A549 (cell line): ENCODE measurements at regions of chr1 and their contacts with region 1.

Region 1: GRCh38 chr1:205977402-205978014 is 25.7 kb downstream of the RAB7B start:
- DNase-seq: peak; percentile 70 to 81
- ATAC-seq: peak; percentile 85 to 97
- H3K4me3 ChIP-seq: no peak overlapping the region
- H3K27ac ChIP-seq: peak overlapping the region; percentile 59 to 77; a peak in 4 of 6 replicates
- H3K4me1 ChIP-seq: peaks cover 16% of the 10 kb centered on the region
- CTCF ChIP-seq: peak; percentile 98
- EP300 ChIP-seq: no peak
- POLR2A ChIP-seq: no peak
- RAD21 ChIP-seq: peak; percentile 99

Region 2: DNA sequence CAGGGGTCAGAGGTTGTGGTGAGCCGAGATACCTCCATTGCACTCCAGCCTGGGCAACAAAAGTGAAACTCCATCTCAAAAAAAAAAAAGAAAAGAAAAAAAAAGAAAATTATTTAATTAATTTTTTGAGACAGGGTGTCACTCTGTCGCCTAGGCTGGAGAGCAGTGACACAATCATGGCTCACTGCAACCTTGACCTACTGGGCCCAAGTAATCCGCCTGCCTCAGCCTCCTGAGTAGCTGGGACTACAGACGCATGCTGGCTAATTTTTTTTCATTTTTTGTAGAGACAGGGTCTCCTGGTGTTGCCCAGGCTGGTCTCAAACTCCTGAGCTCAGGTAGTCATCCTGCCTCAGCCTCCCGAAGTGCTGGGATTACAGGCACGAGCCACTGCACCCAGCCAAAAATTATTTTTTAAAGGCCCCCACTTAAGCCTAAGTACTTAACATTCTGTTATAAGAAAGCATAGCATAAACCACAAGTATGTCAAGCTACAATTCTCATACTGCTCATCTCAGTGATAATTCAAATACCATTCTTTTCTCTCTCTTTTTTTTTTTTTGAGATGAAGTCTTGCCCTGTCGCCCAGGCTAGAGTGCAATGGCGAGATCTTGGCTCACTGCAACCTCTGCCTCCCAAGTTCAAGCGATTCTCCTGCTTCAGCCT is 247.4 kb before region 1 on chr1:
- CTCF ChIA-PET with region 1: no interaction called
- POLR2A ChIA-PET with region 1: no interaction called
- DNase-seq: no peak
- ATAC-seq: no peak; a peak in 1 of 6 replicates
- H3K4me3 ChIP-seq: no peak overlapping the region
- H3K27ac ChIP-seq: no peak overlapping the region
- H3K4me1 ChIP-seq: peaks cover 33% of the 10 kb centered on the region
- CTCF ChIP-seq: no peak
- EP300 ChIP-seq: no peak
- POLR2A ChIP-seq: no peak
- RAD21 ChIP-seq: no peak

Region 3: DNA sequence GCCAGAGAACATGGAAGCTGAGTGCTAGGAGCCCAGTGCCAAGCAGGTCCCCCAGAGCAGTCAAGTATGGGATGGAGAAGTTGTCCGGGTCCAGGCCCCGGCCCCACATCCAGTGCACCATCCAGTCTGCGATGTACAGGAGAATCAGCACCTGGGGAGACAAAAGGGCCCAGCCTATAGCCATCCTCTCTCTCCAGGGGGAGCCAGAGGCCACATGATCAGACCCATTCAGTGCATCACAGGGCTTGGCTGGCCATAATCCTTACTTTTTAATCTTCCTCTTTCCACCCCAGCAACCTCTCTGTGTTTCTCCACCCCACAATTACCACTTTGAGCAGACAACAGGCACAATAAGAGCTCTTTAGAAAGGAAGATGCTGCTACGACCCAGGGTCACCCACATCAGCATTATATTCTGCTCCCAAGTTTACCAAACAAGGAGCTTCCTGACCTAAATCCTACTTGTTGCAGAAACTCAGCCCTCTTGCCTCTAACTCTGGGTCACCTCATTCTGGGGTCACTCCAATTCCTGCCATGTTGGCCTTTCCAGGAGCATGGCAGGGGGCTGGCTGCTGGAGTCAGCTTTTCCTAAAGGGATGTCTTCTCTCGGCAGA is 185.8 kb before region 1 on chr1:
- CTCF ChIA-PET with region 1: interaction called, 371 read pairs
- POLR2A ChIA-PET with region 1: interaction called, 3 read pairs
- DNase-seq: peak; percentile 49 to 83
- ATAC-seq: peak; percentile 96 to 99
- H3K4me3 ChIP-seq: no peak overlapping the region
- H3K27ac ChIP-seq: no peak overlapping the region
- H3K4me1 ChIP-seq: no peaks in the 10 kb centered on the region
- CTCF ChIP-seq: peak; percentile 90
- EP300 ChIP-seq: no peak
- POLR2A ChIP-seq: no peak
- RAD21 ChIP-seq: peak; percentile 95 to 98

Region 4: DNA sequence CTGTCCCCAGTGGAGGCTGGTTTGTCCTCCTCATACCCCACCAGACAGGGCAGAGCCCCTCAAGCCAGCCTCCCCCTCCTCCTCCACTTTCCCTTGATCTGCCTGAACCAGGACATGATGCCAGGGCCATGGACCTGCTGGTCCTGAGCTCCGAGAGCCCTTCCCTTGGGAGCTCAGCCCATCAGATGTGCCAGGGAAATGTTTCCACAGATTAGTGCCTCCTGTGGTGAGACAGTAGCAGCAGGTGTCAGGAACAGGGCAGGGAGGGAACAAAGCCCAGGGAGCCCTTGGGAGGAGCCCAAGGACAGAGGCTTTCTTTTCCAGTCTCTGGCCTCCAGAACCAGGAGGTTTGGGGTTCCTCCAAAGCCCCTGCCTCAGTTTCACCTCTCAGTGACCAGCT is 149.9 kb before region 1 on chr1:
- CTCF ChIA-PET with region 1: interaction called, 10 read pairs
- POLR2A ChIA-PET with region 1: no interaction called
- DNase-seq: peak in 1 of 2 experiments; percentile 13
- ATAC-seq: peak; percentile 86 to 93
- H3K4me3 ChIP-seq: no peak overlapping the region
- H3K27ac ChIP-seq: no peak overlapping the region
- H3K4me1 ChIP-seq: no peaks in the 10 kb centered on the region
- CTCF ChIP-seq: no peak
- EP300 ChIP-seq: no peak
- POLR2A ChIP-seq: no peak
- RAD21 ChIP-seq: no peak

Region 5: GRCh38 chr1:205879975-205880374 is 97.5 kb before region 1 on chr1:
- CTCF ChIA-PET with region 1: no interaction called
- POLR2A ChIA-PET with region 1: no interaction called
- DNase-seq: no peak
- ATAC-seq: no peak
- H3K4me3 ChIP-seq: no peak overlapping the region
- H3K27ac ChIP-seq: no peak overlapping the region
- H3K4me1 ChIP-seq: no peaks in the 10 kb centered on the region
- CTCF ChIP-seq: no peak
- EP300 ChIP-seq: no peak
- POLR2A ChIP-seq: no peak
- RAD21 ChIP-seq: no peak

Region 6: DNA sequence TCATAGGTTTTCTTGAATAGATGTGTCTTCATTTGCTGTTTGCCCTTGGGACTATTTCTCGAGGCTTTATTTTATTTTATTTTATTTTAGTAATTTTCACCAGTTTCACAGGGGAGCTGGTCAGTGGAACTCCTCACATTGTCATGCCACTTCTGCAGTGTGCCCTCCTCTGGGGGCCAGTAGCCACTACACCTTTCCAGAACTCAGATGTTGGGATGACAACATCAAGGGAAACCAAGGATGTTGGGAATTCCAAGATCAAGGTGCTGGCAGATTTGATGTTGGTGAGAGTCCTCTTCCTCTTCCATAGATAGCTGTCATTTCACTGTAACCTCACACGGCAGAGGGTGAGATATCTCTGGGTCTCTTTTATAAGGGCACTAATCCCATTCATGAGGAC is 69.7 kb before region 1 on chr1:
- CTCF ChIA-PET with region 1: interaction called, 822 read pairs
- POLR2A ChIA-PET with region 1: no interaction called
- DNase-seq: peak in 1 of 2 experiments; percentile 52
- ATAC-seq: peak; percentile 90 to 92; a peak in 5 of 6 replicates
- H3K4me3 ChIP-seq: no peak overlapping the region
- H3K27ac ChIP-seq: peak overlapping the region; percentile 26 to 57; a peak in 2 of 6 replicates
- H3K4me1 ChIP-seq: peaks cover 7% of the 10 kb centered on the region; the same call in 2 of the 3 replicates
- CTCF ChIP-seq: peak; percentile 68
- EP300 ChIP-seq: no peak
- POLR2A ChIP-seq: no peak
- RAD21 ChIP-seq: peak; percentile 63 to 77

Region 7: DNA sequence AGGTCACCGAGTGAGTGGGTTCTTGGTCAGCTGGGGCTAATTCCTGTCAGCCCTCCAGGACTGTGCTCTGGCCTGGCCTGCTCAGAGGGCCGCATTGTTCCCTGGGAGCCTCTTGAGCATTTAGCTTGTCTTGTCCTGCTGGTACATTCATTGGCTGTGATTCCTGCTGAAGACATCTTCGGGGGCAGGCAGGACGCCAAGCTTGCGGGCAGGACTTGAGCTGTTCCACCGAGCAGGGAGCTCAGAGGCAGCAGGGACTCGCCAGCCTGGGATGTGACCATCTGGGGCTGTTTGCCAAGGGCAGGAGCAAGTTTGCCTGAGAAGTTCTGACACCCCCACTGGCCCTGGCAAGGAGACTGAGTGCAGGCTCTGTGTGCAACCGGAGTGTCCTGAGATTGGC is 27.2 kb before region 1 on chr1:
- CTCF ChIA-PET with region 1: interaction called, 139 read pairs
- POLR2A ChIA-PET with region 1: no interaction called
- DNase-seq: no peak
- ATAC-seq: no peak
- H3K4me3 ChIP-seq: no peak overlapping the region
- H3K27ac ChIP-seq: no peak overlapping the region
- H3K4me1 ChIP-seq: no peaks in the 10 kb centered on the region
- CTCF ChIP-seq: no peak
- EP300 ChIP-seq: no peak
- POLR2A ChIP-seq: no peak
- RAD21 ChIP-seq: no peak

Region 8: GRCh38 chr1:206001476-206001888 is 24.0 kb after region 1 on chr1:
- CTCF ChIA-PET with region 1: interaction called, 34 read pairs
- POLR2A ChIA-PET with region 1: no interaction called
- DNase-seq: peak; percentile 53 to 90
- ATAC-seq: peak; percentile 90
- H3K4me3 ChIP-seq: no peak overlapping the region
- H3K27ac ChIP-seq: peak overlapping the region in 1 of 2 experiments; percentile 76; a peak in 3 of 6 replicates
- H3K4me1 ChIP-seq: peaks cover 24% of the 10 kb centered on the region
- CTCF ChIP-seq: no peak
- EP300 ChIP-seq: no peak
- POLR2A ChIP-seq: no peak
- RAD21 ChIP-seq: no peak

Region 9: GRCh38 chr1:206128196-206128595 is 150.7 kb after region 1 on chr1:
- CTCF ChIA-PET with region 1: interaction called, 14 read pairs
- POLR2A ChIA-PET with region 1: no interaction called
- DNase-seq: no peak
- ATAC-seq: no peak
- H3K4me3 ChIP-seq: no peak overlapping the region
- H3K27ac ChIP-seq: no peak overlapping the region
- H3K4me1 ChIP-seq: no peaks in the 10 kb centered on the region
- CTCF ChIP-seq: no peak
- EP300 ChIP-seq: no peak
- POLR2A ChIP-seq: no peak
- RAD21 ChIP-seq: no peak